PC-3 (cell line): ENCODE measurements at regions of chr5 and their contacts with region 1.

Region 1: GRCh38 chr5:74167206-74167929 is 473.2 kb downstream of the ENC1 start:
- DNase-seq: peak; percentile 80
- ATAC-seq: peak; percentile 95
- H3K4me3 ChIP-seq: peak overlapping the region; percentile 45
- H3K27ac ChIP-seq: peak overlapping the region; percentile 94
- H3K4me1 ChIP-seq: peaks cover 26% of the 10 kb centered on the region
- H3K27me3 ChIP-seq: no peaks in the 10 kb centered on the region
- CTCF ChIP-seq: no peak

Region 2: DNA sequence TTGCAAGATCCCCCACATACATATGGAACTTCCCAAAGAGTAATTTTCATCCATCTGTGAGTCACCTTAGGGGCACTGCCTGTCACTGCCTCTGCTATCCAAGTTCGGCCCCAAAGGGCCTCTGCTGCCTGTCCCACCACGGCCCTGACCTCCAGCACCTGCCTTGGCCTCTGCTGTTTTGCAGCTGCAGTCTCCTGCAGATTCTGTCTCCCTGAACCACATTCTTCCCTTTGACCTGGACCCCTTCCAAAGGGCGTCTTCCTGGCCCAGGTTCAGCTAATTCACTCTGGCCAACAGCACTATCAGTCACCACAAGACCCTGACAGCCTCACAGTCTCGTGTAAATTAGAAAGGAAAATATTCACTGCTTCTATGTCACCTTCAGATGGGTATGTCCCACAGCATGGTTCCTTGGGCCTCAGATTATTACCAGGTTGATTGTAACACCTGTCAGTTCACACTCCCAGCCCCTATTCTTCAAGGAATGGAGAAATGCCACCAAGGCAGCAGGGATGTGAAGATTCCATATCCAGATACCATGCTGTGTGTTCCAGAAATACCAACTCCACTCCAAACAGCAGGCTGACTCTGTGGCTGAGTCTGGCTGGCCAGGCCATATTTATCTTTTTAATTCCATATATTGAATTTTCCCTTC is 62.1 kb before region 1 on chr5:
- CTCF ChIA-PET with region 1: no interaction called
- POLR2A ChIA-PET with region 1: no interaction called
- intact Hi-C with region 1: no loop called
- DNase-seq: no peak
- ATAC-seq: no peak; the same call in 1 of the 2 replicates
- H3K4me3 ChIP-seq: no peak overlapping the region
- H3K27ac ChIP-seq: no peak overlapping the region
- H3K4me1 ChIP-seq: peaks cover 8% of the 10 kb centered on the region; the same call in 1 of the 2 replicates
- H3K27me3 ChIP-seq: no peaks in the 10 kb centered on the region
- CTCF ChIP-seq: no peak

Region 3: GRCh38 chr5:74201334-74202081 is 34.1 kb after region 1 on chr5:
- CTCF ChIA-PET with region 1: no interaction called
- POLR2A ChIA-PET with region 1: no interaction called
- intact Hi-C with region 1: loop called (anchors 5 kb)
- DNase-seq: peak; percentile 65
- ATAC-seq: peak; percentile 92
- H3K4me3 ChIP-seq: no peak overlapping the region; the same call in 1 of the 2 replicates
- H3K27ac ChIP-seq: peak overlapping the region; percentile 77
- H3K4me1 ChIP-seq: peaks cover 27% of the 10 kb centered on the region
- H3K27me3 ChIP-seq: no peaks in the 10 kb centered on the region
- CTCF ChIP-seq: peak; percentile 33; the same call in 1 of the 2 replicates